Activated naive CD4-positive, alpha-beta T cell treated with anti-CD3 and anti-CD28 coated beads for 36 hours (primary cell): ENCODE measurements at regions of chr7 and their contacts with region 1.

Region 1: GRCh38 chr7:107661081-107661864 is 645 bp downstream of the SLC26A4 start:
- DNase-seq: peak; percentile 69
- H3K4me3 Mint-ChIP-seq: peak overlapping the region; percentile 86
- H3K27ac Mint-ChIP-seq: no peak overlapping the region
- H3K4me1 Mint-ChIP-seq: peaks cover 26% of the 10 kb centered on the region
- H3K27me3 Mint-ChIP-seq: peaks cover 31% of the 10 kb centered on the region

Region 2: GRCh38 chr7:107130487-107131225 is 530.6 kb before region 1 on chr7:
- CTCF ChIA-PET with region 1: no interaction called
- intact Hi-C with region 1: loop called (anchors 2 kb)
- DNase-seq: no peak
- H3K4me3 Mint-ChIP-seq: no peak overlapping the region
- H3K27ac Mint-ChIP-seq: no peak overlapping the region
- H3K4me1 Mint-ChIP-seq: peaks cover 10% of the 10 kb centered on the region
- H3K27me3 Mint-ChIP-seq: no peaks in the 10 kb centered on the region

Region 3: GRCh38 chr7:107462740-107463444 is 198.4 kb before region 1 on chr7:
- CTCF ChIA-PET with region 1: no interaction called
- intact Hi-C with region 1: loop called (anchors 1 kb)
- DNase-seq: peak; percentile 64
- H3K4me3 Mint-ChIP-seq: no peak overlapping the region
- H3K27ac Mint-ChIP-seq: no peak overlapping the region
- H3K4me1 Mint-ChIP-seq: no peaks in the 10 kb centered on the region
- H3K27me3 Mint-ChIP-seq: no peaks in the 10 kb centered on the region

Region 4: DNA sequence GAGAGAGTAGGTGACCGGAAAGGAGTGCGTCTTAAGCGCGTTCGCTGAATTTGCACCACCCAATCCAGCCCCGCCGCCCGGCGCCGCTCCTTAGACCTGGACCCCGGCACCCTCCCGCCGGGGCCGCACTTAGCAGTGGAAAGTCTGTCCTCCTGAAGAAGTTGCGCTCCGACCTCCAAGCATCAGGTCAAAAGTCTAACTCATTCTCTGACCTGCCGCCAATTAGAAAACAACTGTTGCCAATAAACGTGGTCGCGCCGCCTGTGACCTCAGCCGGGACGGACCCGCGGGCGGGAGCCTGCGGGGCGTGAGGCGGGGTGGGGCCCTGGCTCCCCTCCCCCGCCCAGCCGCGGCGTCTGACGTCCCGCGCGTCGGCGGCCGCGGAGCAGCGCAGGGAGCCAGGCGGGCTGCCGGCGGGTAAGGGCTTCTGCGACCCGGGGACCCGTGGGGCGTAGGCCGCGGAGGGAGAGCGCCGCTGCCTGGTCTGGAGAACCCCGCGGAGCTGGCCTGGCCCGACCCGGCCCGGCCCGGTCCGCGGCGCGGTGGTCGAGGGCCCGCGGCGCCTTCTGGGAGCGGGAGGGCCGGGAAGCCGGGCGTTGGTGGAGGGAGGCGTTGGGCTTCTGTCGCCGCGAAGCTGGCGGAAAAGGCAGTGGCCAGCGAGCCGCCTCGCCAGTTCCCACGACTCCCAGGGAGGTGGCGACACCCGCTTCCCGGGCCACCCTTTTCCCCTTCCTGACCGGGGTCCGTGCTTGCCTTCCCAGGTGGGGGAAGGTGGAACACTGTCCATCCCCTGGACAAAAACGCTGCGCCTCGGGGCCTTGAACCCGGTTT is 81.2 kb before region 1 on chr7 and contains the start of gene BCAP29:
- CTCF ChIA-PET with region 1: interaction called, 6 read pairs
- intact Hi-C with region 1: loop called (anchors 1 kb)
- DNase-seq: peak; percentile 64
- H3K4me3 Mint-ChIP-seq: peak within 1 kb of the TSS; percentile 85
- H3K27ac Mint-ChIP-seq: peak within 1 kb of the TSS; percentile 71
- H3K4me1 Mint-ChIP-seq: peaks cover 21% of the 10 kb centered on the region
- H3K27me3 Mint-ChIP-seq: no peaks in the 10 kb centered on the region
- total RNA-seq, gene BCAP29: 18.9 to 21.0 TPM

Region 5: DNA sequence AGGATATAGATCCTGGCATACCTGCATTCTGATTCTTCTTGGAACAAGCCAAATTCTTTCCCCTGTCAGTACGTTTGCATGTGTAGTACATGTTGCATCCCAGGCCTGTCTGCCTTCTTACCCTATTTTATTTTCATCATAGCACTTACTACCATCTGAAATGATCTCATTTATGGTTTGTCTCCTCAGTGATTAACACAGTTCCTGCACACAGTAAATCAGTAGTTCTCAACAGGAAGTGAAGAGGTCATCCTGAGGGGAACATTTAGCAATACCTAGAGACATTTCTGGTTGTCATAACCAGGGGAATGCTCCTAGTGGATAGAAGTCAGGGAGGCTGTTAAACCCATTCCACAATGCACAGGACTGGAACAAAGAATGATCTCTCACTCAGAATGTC is 38.8 kb before region 1 on chr7:
- CTCF ChIA-PET with region 1: no interaction called
- intact Hi-C with region 1: loop called (anchors 1 kb)
- DNase-seq: no peak
- H3K4me3 Mint-ChIP-seq: no peak overlapping the region
- H3K27ac Mint-ChIP-seq: no peak overlapping the region
- H3K4me1 Mint-ChIP-seq: no peaks in the 10 kb centered on the region
- H3K27me3 Mint-ChIP-seq: no peaks in the 10 kb centered on the region

Region 6: GRCh38 chr7:107816011-107816566 is 154.8 kb after region 1 on chr7:
- CTCF ChIA-PET with region 1: interaction called, 3 read pairs
- intact Hi-C with region 1: loop called (anchors 1 kb)
- DNase-seq: no peak
- H3K4me3 Mint-ChIP-seq: no peak overlapping the region
- H3K27ac Mint-ChIP-seq: peak overlapping the region; percentile 1
- H3K4me1 Mint-ChIP-seq: peaks cover 32% of the 10 kb centered on the region
- H3K27me3 Mint-ChIP-seq: peaks cover 2% of the 10 kb centered on the region

Region 7: GRCh38 chr7:107890962-107891635 is 229.8 kb after region 1 on chr7 and contains the start of gene DLD:
- CTCF ChIA-PET with region 1: no interaction called
- intact Hi-C with region 1: loop called (anchors 1 kb)
- DNase-seq: peak; percentile 96
- H3K4me3 Mint-ChIP-seq: peak within 1 kb of the TSS; percentile 100
- H3K27ac Mint-ChIP-seq: peak within 1 kb of the TSS; percentile 98
- H3K4me1 Mint-ChIP-seq: peaks cover 37% of the 10 kb centered on the region
- H3K27me3 Mint-ChIP-seq: no peaks in the 10 kb centered on the region
- total RNA-seq, gene DLD: 92.6 to 96.8 TPM